ENCODE measurements at regions of chr17 and their contacts with region 1.

Region 1: DNA sequence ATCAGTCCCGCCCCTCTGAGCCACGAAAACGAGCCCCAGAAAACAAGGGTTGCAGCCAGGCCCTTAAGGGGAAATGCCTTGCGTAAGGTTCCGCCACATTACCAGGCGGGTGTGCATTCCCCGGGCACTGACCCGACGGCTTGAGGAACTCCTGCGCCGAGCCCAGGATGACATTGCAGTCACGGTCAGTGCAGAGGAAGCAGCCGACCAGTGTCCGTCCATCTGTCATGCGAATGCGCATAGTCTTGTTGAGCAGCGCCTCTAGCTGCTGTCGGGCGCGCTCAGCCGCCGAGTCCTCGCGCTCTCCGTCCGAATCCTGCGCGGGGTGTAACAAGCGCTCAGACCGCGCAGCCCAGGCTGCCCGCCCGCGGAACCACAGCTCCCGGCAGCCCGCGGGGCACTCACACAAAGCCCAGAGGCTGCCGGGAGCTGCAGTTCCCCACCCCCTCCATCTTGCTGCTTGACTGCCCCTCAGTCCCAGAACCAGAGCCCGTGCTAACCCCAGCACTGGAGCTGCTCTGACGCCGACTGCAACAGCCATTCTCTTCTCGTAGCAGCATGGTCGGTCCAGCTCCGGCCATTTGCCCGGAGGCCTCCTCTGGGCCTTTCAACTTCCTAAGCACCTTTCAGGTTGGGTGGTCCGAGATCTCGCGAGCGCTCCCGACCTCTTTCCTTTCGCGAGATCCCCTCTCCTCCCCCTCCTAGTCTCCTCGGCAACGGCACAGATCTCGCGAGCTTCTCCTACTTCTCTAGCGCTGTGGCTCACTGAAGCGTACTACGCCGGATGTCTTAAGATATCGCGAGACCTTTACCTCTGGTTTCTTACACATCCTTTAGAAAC is at the start of gene NAA38:
- DNase-seq: peak; percentile 89 to 96
- H3K4me3 ChIP-seq: peak within 1 kb of the TSS; percentile 49
- H3K4me3 Mint-ChIP-seq: no peak within 1 kb of the TSS
- H3K27ac Mint-ChIP-seq: no peak within 1 kb of the TSS
- H3K4me1 ChIP-seq: no peaks in the 10 kb centered on the region
- H3K4me1 Mint-ChIP-seq: peaks cover 5% of the 10 kb centered on the region
- H3K27me3 ChIP-seq: no peaks in the 10 kb centered on the region
- H3K27me3 Mint-ChIP-seq: no peaks in the 10 kb centered on the region
- CTCF ChIP-seq: peak in 1 of 2 experiments; percentile 40
- total RNA-seq, gene NAA38: 20.9 and 27.4 TPM in 2 replicates

Region 2: GRCh38 chr17:6927290-6928126 is 929.6 kb before region 1 on chr17:
- CTCF ChIA-PET with region 1: no interaction called
- POLR2A ChIA-PET with region 1: no interaction called
- intact Hi-C with region 1: no loop called
- DNase-seq: no peak
- H3K4me3 ChIP-seq: no peak overlapping the region
- H3K4me3 Mint-ChIP-seq: no peak overlapping the region
- H3K27ac Mint-ChIP-seq: no peak overlapping the region
- H3K4me1 ChIP-seq: no peaks in the 10 kb centered on the region
- H3K4me1 Mint-ChIP-seq: no peaks in the 10 kb centered on the region
- H3K27me3 ChIP-seq: no peaks in the 10 kb centered on the region
- H3K27me3 Mint-ChIP-seq: peaks cover 14% of the 10 kb centered on the region
- CTCF ChIP-seq: no peak

Region 3: GRCh38 chr17:7823581-7824397 is 33.3 kb before region 1 on chr17:
- CTCF ChIA-PET with region 1: interaction called, 5 read pairs
- POLR2A ChIA-PET with region 1: no interaction called
- intact Hi-C with region 1: loop called (anchors 1 kb)
- DNase-seq: no peak
- H3K4me3 ChIP-seq: no peak overlapping the region
- H3K4me3 Mint-ChIP-seq: no peak overlapping the region
- H3K27ac Mint-ChIP-seq: no peak overlapping the region
- H3K4me1 ChIP-seq: no peaks in the 10 kb centered on the region
- H3K4me1 Mint-ChIP-seq: peaks cover 10% of the 10 kb centered on the region
- H3K27me3 ChIP-seq: no peaks in the 10 kb centered on the region
- H3K27me3 Mint-ChIP-seq: no peaks in the 10 kb centered on the region
- CTCF ChIP-seq: no peak

Region 4: GRCh38 chr17:7834962-7835813 is 21.9 kb before region 1 on chr17:
- CTCF ChIA-PET with region 1: interaction called, 8 read pairs
- POLR2A ChIA-PET with region 1: interaction called, 14 read pairs
- intact Hi-C with region 1: loop called (anchors 1 kb)
- DNase-seq: peak; percentile 90 to 95
- H3K4me3 ChIP-seq: peak overlapping the region; percentile 82
- H3K4me3 Mint-ChIP-seq: peak overlapping the region; percentile 98
- H3K27ac Mint-ChIP-seq: peak overlapping the region; percentile 99
- H3K4me1 ChIP-seq: peaks cover 23% of the 10 kb centered on the region
- H3K4me1 Mint-ChIP-seq: peaks cover 19% of the 10 kb centered on the region
- H3K27me3 ChIP-seq: no peaks in the 10 kb centered on the region
- H3K27me3 Mint-ChIP-seq: no peaks in the 10 kb centered on the region
- CTCF ChIP-seq: peak; percentile 31 to 69

Region 5: DNA sequence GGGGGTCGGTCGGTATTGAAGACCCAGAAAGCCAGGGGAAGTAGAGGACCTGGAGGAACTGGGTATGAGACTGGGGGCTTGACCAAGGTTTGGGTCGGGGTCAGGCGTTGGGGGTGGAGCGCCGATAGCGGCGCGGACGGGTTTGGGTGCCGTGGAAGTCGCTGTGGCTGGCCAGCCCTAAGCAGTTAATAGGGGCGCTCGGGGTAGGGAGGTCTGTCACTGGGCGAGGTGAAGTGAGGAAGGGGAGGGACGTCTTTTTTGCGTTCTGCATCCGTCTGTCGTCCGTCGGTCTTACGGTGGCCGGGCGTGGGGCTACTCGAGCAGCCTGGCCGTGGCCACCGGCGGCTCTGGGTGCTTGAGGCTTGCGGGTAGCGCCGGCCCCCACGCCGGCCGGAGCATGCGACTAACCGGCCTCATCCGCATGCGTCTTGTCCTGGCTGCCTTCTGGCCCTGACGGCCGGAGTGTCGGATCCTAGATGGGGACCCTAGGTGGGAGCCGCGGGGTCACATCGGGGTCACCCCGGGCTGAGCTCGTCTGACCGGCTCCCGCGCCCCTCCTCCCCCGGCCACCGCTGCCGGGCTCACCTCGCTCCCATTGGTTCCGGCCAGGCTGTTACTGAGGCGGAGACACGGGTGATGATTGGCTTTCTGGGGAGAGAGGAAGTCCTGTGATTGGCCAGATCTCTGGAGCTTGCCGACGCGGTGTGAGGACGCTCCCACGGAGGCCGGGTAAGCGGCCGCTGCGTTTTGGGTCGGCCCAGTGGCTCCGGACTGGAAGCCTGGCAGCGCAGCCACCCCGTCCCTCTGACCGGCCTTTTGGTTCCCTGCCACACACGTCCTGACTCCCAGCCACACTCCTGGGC is 12.6 kb before region 1 on chr17:
- CTCF ChIA-PET with region 1: interaction called, 7 read pairs
- POLR2A ChIA-PET with region 1: interaction called, 27 read pairs
- intact Hi-C with region 1: loop called (anchors 2 kb)
- DNase-seq: peak; percentile 88
- H3K4me3 ChIP-seq: peak overlapping the region; percentile 68
- H3K4me3 Mint-ChIP-seq: peak overlapping the region; percentile 82
- H3K27ac Mint-ChIP-seq: peak overlapping the region; percentile 98
- H3K4me1 ChIP-seq: peaks cover 18% of the 10 kb centered on the region
- H3K4me1 Mint-ChIP-seq: peaks cover 12% of the 10 kb centered on the region
- H3K27me3 ChIP-seq: no peaks in the 10 kb centered on the region
- H3K27me3 Mint-ChIP-seq: no peaks in the 10 kb centered on the region
- CTCF ChIP-seq: no peak

Measured in Caco-2 (cell line).